A549 (cell line): ENCODE measurements at regions of chr10 and their contacts with region 1.

Region 1: DNA sequence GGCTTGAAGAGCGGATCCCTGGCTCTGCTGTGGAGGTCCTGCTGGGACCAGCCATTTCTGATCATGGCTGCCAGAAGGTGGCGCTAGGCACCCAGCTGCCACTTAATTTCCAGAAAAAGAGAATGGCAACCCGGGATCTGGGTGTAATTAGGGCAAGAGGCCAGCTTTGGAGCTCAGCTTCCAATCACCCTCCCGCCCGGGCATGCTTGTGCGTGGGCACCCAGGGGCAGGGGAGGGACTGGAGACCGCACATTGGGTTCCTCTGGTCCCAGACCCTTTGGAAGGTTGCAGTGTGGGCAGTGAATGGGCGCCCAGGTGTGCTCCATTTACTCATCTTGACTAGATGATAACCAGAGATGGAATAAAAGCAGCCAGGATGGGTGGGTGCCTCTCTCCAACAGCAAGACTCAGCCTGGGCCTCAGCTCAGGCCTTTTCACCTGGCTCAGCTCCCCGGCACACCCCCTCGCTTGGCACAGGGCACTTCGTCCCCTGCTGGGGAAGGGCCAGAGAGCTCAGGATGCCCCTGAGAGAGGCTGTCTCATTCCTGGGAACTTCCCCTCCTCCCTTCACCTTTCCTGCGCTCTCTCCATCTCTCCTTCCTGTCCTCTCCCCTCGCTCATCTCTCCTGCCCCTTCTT is 14.7 kb downstream of the FAM241B start:
- DNase-seq: peak; percentile 48 to 90
- ATAC-seq: peak; percentile 49 to 89; a peak in 5 of 6 replicates
- H3K4me3 ChIP-seq: no peak overlapping the region
- H3K27ac ChIP-seq: no peak overlapping the region
- H3K4me1 ChIP-seq: no peaks in the 10 kb centered on the region
- CTCF ChIP-seq: peak; percentile 83
- EP300 ChIP-seq: no peak
- POLR2A ChIP-seq: no peak
- RAD21 ChIP-seq: peak; percentile 84 to 93

Region 2: DNA sequence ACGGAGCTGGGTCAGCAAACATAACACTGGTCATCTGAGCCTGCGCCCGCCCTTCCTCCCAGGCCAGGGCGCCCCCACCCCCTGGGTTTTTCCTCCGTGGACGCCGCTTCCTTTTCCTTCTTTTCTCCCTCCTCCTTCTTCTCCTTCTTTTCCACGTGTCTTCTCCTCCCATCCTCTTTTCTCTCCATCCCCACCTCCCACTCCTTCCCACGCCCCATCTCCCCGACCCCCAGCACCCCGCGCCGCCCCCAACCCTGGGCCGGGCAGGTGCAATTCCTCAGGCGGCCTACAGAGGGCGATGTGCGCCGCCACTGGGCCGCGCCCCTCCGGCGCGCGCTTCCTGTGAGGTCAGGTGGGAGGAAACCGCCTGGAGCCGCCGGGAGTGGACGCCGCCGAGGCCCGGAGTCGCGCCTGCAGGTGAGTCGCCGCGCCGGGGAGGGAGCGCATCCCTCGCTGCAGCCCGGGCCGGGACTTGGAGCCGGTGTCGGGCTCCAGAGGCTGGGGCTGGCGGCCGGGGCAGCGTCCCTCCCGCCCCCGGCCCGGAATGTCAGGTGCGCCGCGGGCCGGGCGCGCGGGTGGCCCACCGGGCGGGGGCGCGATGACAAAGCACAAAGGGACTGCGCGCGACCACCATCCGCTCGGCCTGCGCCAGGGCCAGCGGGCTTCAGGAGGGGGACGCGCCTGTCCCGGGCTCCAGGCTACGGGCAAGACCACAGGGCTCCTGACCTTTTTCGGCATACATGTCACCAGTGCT is 14.7 kb before region 1 on chr10 and contains the start of gene FAM241B:
- CTCF ChIA-PET with region 1: interaction called, 331 read pairs
- POLR2A ChIA-PET with region 1: no interaction called
- DNase-seq: peak; percentile 70 to 82
- ATAC-seq: peak; percentile 86 to 94
- H3K4me3 ChIP-seq: peak within 1 kb of the TSS; percentile 77
- H3K27ac ChIP-seq: peak within 1 kb of the TSS; percentile 80 to 98
- H3K4me1 ChIP-seq: peaks cover 7% of the 10 kb centered on the region
- CTCF ChIP-seq: peak; percentile 89
- EP300 ChIP-seq: no peak
- POLR2A ChIP-seq: peak; percentile 43
- RAD21 ChIP-seq: peak in 1 of 2 experiments; percentile 51; a peak in 2 of 5 replicates
- polyA plus RNA-seq, gene FAM241B: 17.8 and 22.8 TPM in 2 replicates

Region 3: GRCh38 chr10:69685802-69686585 is 41.2 kb after region 1 on chr10:
- CTCF ChIA-PET with region 1: interaction called, 17 read pairs
- POLR2A ChIA-PET with region 1: no interaction called
- DNase-seq: no peak
- ATAC-seq: no peak
- H3K4me3 ChIP-seq: no peak overlapping the region
- H3K27ac ChIP-seq: no peak overlapping the region
- H3K4me1 ChIP-seq: no peaks in the 10 kb centered on the region
- CTCF ChIP-seq: no peak
- EP300 ChIP-seq: no peak
- POLR2A ChIP-seq: no peak
- RAD21 ChIP-seq: no peak